ENCODE measurements at regions of chr22 and their contacts with region 1.

Region 1: GRCh38 chr22:30830907-30831306 is 136.2 kb downstream of the OSBP2 start:
- DNase-seq: no peak
- ATAC-seq: no peak

Region 2: GRCh38 chr22:29871684-29872083 is 959.2 kb before region 1 on chr22:
- intact Hi-C with region 1: loop called (anchors 5 kb)
- DNase-seq: no peak
- ATAC-seq: no peak

Measured in sciatic nerve (tissue), 2 donors.